ENCODE measurements at regions of chr5 and their contacts with region 1.

Region 1: DNA sequence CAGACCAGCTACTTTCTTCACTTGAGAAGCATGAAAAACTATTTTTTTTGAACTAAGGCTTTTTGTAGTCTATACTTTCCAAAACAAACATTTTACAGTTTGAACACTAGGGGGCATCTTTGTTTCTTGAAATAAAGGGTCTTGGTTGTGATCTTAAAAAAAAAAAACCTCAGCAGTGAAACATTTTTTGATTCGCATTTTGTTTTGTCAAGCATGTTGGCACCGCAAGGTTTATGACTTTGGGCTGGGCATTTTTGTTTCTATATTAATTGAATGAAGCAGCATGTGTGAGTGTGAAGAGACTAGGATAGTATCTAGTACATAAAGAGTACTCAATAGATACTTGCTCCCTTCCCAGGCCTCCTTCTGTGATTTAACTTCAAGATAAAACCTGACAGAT is 31.6 kb upstream of the ACOT12 start:
- DNase-seq: no peak
- ATAC-seq: peak; percentile 84
- H3K4me3 ChIP-seq: no peak overlapping the region
- H3K27ac ChIP-seq: no peak overlapping the region
- H3K4me1 ChIP-seq: no peaks in the 10 kb centered on the region
- H3K27me3 ChIP-seq: no peaks in the 10 kb centered on the region
- CTCF ChIP-seq: peak; percentile 36 to 55 (median 48); a peak in 4 of 6 replicates
- EP300 ChIP-seq: no peak
- POLR2A ChIP-seq: no peak
- RAD21 ChIP-seq: peak; percentile 60

Region 2: GRCh38 chr5:81838307-81838906 is 412.8 kb after region 1 on chr5:
- CTCF ChIA-PET with region 1: interaction called, 14 read pairs
- POLR2A ChIA-PET with region 1: no interaction called
- RAD21 ChIA-PET with region 1: no interaction called
- SMC1A ChIA-PET with region 1: interaction called, 3 read pairs
- in situ Hi-C with region 1: no loop called
- intact Hi-C with region 1: loop called (anchors 1 kb)
- DNase-seq: no peak
- ATAC-seq: peak; percentile 92
- H3K4me3 ChIP-seq: no peak overlapping the region
- H3K27ac ChIP-seq: no peak overlapping the region
- H3K4me1 ChIP-seq: no peaks in the 10 kb centered on the region
- H3K27me3 ChIP-seq: no peaks in the 10 kb centered on the region
- CTCF ChIP-seq: peak; percentile 51 to 61 (median 54)
- EP300 ChIP-seq: no peak
- POLR2A ChIP-seq: no peak
- RAD21 ChIP-seq: peak; percentile 74